ENCODE measurements at regions of chr11 and their contacts with region 1.

Region 1: GRCh38 chr11:60821827-60822599 is 19.9 kb upstream of the CCDC86 start:
- DNase-seq: no peak
- ATAC-seq: no peak
- H3K4me3 ChIP-seq: no peak overlapping the region
- H3K27ac ChIP-seq: no peak overlapping the region
- H3K4me1 ChIP-seq: no peaks in the 10 kb centered on the region
- H3K27me3 ChIP-seq: no peaks in the 10 kb centered on the region
- CTCF ChIP-seq: no peak
- POLR2A ChIP-seq: no peak

Region 2: GRCh38 chr11:61193596-61193995 is 371.6 kb after region 1 on chr11:
- intact Hi-C with region 1: loop called (anchors 10 kb)
- DNase-seq: no peak
- ATAC-seq: no peak
- H3K4me3 ChIP-seq: no peak overlapping the region
- H3K27ac ChIP-seq: no peak overlapping the region
- H3K4me1 ChIP-seq: no peaks in the 10 kb centered on the region
- H3K27me3 ChIP-seq: no peaks in the 10 kb centered on the region
- CTCF ChIP-seq: no peak
- POLR2A ChIP-seq: no peak

Region 3: GRCh38 chr11:61787928-61788491 is 966.0 kb after region 1 on chr11:
- intact Hi-C with region 1: no loop called
- DNase-seq: peak; percentile 61 to 69 (median 68)
- ATAC-seq: no peak
- H3K4me3 ChIP-seq: no peak overlapping the region
- H3K27ac ChIP-seq: peak overlapping the region in 1 of 4 donors; percentile 30
- H3K4me1 ChIP-seq: peaks cover 17% of the 10 kb centered on the region
- H3K27me3 ChIP-seq: no peaks in the 10 kb centered on the region
- CTCF ChIP-seq: peak; percentile 19 to 79 (median 65)
- POLR2A ChIP-seq: no peak

Measured in body of pancreas (tissue), 4 donors.